RWPE1 (cell line): ENCODE measurements at regions of chr5 and their contacts with region 1.

Region 1: DNA sequence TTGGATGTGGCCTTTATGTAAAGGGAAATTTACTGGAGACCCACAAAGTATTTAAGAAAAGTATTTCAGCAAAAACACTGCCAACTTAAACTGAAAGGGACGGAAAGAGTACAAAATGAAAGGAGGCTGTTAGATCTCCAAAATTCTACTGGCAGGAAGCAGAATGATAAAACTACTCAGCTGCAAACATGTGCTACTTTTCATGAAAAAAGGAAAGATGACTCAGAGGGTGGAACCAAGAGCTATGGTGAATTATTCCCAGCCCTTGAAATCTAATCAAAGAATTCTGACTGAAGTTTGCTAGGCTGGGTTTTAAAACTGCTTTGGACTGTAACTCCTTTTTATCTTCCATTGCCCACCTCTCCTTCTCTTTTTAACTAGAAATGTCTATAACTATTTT is 58.6 kb upstream of the ZBED3 start:
- DNase-seq: peak; percentile 48
- H3K27ac ChIP-seq: no peak overlapping the region
- CTCF ChIP-seq: no peak

Region 2: DNA sequence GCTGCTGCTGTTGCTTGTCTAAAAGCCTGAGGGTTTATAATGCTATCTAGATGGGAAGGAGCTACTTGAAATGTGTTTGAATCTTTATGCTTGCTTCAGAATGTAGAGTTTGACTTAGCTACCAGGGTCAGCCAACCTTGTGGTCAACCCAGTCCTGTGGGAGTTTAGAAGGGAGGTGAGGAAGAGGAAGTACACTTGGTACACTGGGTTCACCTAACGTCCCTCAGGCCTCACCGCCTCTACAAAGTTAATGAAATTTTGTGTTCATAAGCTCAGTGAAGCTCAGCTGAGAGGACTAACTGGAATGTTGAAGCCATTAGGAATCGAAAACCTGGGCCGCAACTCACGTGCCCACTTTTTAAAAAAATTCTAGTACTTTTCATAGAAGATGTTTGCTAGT is 731.9 kb before region 1 on chr5:
- CTCF ChIA-PET with region 1: no interaction called
- POLR2A ChIA-PET with region 1: no interaction called
- DNase-seq: no peak
- H3K27ac ChIP-seq: no peak overlapping the region
- CTCF ChIP-seq: no peak

Region 3: GRCh38 chr5:77491783-77492652 is 346.4 kb after region 1 on chr5 and contains the start of gene WDR41:
- CTCF ChIA-PET with region 1: interaction called, 12 read pairs
- POLR2A ChIA-PET with region 1: no interaction called
- DNase-seq: peak; percentile 95
- H3K27ac ChIP-seq: peak within 1 kb of the TSS; percentile 98
- CTCF ChIP-seq: peak; percentile 99